ENCODE measurements at regions of chr21 and their contacts with region 1.

Region 1: DNA sequence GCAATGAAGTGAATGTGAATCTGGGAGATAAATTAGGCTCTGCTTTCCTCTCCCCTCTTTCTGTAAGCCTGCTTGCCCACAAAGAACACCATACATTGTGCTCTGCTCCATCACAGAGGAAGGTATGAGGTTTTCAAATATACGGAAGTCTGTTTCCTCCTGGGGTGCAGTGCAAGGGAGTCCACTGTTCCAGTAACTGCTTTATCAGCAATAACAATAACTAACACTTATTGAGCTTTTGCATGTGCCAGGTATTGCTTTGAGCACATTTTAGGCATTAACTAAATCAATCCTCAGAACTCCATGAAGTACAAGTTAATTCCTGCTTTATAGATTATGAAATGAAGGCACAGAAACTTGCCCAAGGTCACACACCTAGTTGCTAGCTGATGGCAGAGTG is 10.0 kb downstream of the LTN1 start:
- DNase-seq: no peak
- CTCF ChIP-seq: no peak

Region 2: DNA sequence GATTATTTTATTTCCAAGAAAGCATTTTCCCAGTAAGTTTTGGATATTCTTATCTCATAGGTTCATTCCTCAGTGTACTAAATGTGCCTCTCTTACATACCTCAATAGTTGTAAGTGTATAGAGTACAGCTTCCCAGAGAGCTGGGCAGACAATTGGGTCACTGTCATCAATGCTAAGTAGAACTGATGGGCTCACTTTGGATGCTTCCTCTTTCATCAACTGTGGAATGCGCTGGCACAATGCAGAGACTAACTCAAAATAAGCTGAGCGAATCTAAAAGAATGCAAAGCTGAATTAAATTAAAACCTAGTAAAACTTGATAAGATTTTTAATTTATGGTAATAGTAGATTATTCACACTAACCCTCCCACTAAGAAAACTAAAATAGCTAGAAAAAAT is 11.5 kb before region 1 on chr21:
- CTCF ChIA-PET with region 1: interaction called, 14 read pairs
- POLR2A ChIA-PET with region 1: no interaction called
- DNase-seq: no peak
- CTCF ChIP-seq: no peak

Region 3: GRCh38 chr21:29219165-29219770 is 236.6 kb after region 1 on chr21:
- CTCF ChIA-PET with region 1: no interaction called
- POLR2A ChIA-PET with region 1: no interaction called
- DNase-seq: no peak
- CTCF ChIP-seq: no peak